ENCODE measurements at regions of chr19 and their contacts with region 1.

Region 1: GRCh38 chr19:58059003-58059670 is at the start of gene ZNF135:
- DNase-seq: peak; percentile 91
- ATAC-seq: peak; percentile 97
- total RNA-seq, gene ZNF135: 3.7 TPM

Region 2: DNA sequence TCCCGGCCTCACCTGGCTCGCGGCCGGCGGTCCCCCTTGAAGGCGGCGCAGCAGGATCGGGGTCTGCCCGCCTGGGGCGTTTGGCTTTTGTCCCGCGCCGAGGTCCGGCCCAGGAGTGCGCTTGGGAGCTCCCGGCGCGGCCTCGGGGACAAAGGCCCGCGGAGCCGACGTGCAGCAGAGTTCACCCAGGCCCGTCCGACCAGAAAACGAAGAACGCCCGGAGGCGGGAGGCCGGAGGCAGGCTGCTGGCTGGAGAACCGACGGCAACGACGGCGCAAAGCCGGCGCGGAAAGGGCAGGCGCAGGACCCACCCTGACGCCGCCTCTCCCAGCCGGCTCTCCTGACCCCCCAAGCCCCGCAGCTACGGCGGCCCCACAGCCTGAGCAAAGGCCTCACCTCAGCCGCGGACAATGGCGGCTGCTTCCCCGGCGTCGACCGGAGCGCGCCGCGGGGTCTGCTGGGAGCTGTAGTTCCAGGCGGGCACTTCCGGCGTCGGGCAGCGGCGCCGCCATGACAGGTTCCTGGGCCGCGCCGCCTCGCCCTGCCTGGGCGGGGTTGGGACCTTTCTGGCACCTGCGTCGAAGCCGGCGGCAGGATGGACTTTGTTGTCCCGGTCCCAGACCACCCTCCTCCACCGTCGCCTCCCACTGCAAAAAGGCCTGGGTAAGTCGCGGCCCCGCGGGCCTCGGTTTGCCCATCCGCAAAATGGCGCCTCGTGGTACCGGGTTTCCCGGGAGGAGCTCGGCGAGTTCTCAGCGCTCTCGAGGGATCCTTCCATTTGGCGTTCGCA is 56.6 kb before region 1 on chr19 and contains the start of gene ZNF606:
- intact Hi-C with region 1: loop called (anchors 5 kb)
- DNase-seq: peak; percentile 95
- ATAC-seq: peak; percentile 98
- total RNA-seq, gene ZNF606: 11.8 TPM

Region 3: DNA sequence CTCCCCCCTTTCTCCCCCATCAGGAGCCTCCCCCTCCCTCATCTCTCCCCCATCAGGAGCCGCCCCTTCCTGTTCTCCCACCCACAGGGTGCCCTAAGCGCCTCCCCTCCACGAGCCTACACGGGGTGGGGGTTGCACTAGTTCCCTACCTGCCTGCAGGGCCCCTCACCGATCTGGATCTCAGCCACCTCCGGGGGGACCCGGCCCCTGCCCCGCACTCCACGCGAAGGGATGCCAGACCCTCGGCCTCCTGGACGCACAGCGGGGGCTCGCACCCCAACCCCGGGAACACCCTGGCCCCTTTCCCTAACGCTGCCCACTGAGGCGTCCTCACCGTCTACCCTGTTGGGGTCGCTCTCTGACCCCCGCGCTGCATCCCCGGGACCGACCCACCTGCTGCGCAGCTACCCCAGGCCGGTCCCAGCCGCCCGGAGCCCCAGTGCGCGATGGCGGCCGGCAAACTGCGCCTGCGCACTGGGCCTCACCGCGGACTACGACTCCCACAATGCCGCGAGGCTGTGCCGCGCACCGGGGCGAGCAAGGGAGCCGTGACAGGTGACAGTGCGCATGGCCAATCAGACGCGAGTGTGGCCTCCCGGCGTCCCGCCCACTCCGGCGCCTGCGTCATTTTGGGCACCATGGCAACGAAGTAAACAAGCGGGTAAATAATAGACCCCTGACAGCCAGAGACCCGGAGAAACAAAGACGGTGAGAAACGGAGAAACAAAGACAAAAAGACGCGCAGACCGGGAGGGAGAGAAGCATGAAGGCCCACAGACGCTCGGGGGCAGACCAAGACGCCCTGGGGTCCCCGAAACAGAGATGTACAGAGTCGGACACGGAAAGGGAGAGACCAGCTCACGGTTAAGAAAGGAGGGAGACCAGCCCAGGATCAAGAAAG is 38.9 kb after region 1 on chr19 and contains the start of gene ZSCAN18:
- intact Hi-C with region 1: loop called (anchors 1 kb)
- DNase-seq: peak; percentile 99
- ATAC-seq: peak; percentile 99
- total RNA-seq, gene ZSCAN18: 65.8 TPM